ENCODE measurements at regions of chr17 and their contacts with region 1.

Region 1: DNA sequence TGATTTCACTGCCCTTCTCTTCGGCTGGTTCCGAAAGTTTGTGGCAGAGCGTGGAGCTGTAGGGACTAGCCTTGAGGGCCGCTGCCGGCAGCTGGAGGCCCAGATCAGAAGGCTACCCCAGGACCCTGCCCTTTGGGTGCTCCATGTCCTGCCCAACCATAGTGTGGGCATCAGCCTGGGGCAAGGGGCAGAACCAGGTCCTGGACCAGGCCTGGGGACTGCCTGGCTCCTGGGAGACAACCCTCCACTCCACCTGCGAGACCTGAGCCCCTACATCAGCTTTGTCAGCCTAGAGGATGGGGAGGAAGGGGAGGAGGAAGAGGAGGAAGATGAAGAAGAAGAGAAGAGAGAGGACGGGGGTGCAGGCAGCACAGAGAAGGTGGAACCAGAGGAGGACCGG is 856 bp upstream of the CXCL16 start:
- DNase-seq: no peak
- H3K27ac ChIP-seq: no peak overlapping the region
- CTCF ChIP-seq: no peak

Region 2: DNA sequence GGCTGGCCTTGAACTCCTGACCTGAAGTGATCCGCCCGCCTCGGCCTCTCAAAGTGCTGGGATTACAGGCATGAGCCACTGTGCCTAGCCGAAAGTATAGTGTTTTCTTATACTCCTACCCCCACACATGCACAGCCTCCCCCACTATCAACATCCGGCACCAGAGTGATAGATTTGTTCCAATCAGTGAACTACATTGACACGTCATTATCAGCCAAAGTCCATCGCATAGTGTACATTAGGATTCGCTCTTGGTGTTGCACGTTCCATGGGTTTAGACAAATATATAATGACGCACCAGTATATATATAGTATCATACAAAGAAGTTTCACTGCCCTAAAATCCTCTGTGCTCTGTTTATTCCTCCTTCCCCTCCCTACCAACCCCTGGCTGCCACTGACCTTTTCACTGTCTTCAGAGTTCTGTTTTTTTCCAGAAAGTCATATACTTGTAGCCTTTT is 19.2 kb after region 1 on chr17:
- CTCF ChIA-PET with region 1: interaction called, 3 read pairs
- POLR2A ChIA-PET with region 1: interaction called, 17 read pairs
- DNase-seq: no peak
- H3K27ac ChIP-seq: no peak overlapping the region
- CTCF ChIP-seq: no peak

Measured in RWPE1 (cell line).